ENCODE measurements at regions of chr3 and their contacts with region 1.

Region 1: DNA sequence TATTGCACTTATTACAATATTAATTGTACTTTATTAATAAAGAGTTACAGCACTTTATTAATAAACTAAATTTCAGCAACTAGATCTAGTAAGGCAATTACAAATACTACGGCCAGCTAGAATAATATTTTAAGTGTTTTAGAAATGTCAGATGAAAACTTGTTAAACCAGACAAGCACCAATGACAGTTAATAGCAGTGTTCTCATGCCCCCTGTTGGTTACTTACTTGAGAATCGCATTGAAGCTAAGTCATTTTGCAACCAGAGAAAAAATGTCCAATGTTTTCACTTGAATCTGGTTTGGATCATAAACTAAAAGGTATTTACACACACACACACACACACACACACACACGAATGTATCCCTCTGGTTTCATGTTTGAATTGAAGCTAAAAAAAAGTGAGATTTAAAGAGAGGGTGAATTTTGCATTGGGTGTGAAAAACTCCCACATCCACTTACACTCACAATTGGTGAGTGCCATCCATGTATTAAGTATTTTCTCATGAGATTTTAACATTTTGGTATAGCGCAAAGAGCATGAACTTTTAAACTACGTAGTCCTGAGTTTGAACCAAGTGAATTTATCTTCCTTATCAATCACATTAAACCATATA is 347.7 kb downstream of the ZBBX start:
- DNase-seq: peak; percentile 61
- H3K4me3 ChIP-seq: no peak overlapping the region
- H3K27ac ChIP-seq: no peak overlapping the region
- H3K4me1 ChIP-seq: no peaks in the 10 kb centered on the region
- H3K27me3 ChIP-seq: no peaks in the 10 kb centered on the region
- CTCF ChIP-seq: peak; percentile 64

Region 2: GRCh38 chr3:165854696-165855095 is 1177.7 kb before region 1 on chr3:
- CTCF ChIA-PET with region 1: no interaction called
- POLR2A ChIA-PET with region 1: no interaction called
- intact Hi-C with region 1: loop called (anchors 5 kb)
- DNase-seq: peak; percentile 49
- H3K4me3 ChIP-seq: no peak overlapping the region
- H3K27ac ChIP-seq: no peak overlapping the region
- H3K4me1 ChIP-seq: peaks cover 7% of the 10 kb centered on the region
- H3K27me3 ChIP-seq: no peaks in the 10 kb centered on the region
- CTCF ChIP-seq: peak; percentile 70

Region 3: GRCh38 chr3:165895918-165896317 is 1136.5 kb before region 1 on chr3:
- CTCF ChIA-PET with region 1: no interaction called
- POLR2A ChIA-PET with region 1: no interaction called
- intact Hi-C with region 1: loop called (anchors 2 kb)
- DNase-seq: peak; percentile 49
- H3K4me3 ChIP-seq: no peak overlapping the region
- H3K27ac ChIP-seq: no peak overlapping the region
- H3K4me1 ChIP-seq: no peaks in the 10 kb centered on the region
- H3K27me3 ChIP-seq: no peaks in the 10 kb centered on the region
- CTCF ChIP-seq: peak; percentile 68

Region 4: GRCh38 chr3:166013073-166013679 is 1019.2 kb before region 1 on chr3:
- CTCF ChIA-PET with region 1: no interaction called
- POLR2A ChIA-PET with region 1: no interaction called
- intact Hi-C with region 1: loop called (anchors 2 kb)
- DNase-seq: peak; percentile 56
- H3K4me3 ChIP-seq: no peak overlapping the region
- H3K27ac ChIP-seq: no peak overlapping the region
- H3K4me1 ChIP-seq: no peaks in the 10 kb centered on the region
- H3K27me3 ChIP-seq: no peaks in the 10 kb centered on the region
- CTCF ChIP-seq: peak; percentile 65

Region 5: DNA sequence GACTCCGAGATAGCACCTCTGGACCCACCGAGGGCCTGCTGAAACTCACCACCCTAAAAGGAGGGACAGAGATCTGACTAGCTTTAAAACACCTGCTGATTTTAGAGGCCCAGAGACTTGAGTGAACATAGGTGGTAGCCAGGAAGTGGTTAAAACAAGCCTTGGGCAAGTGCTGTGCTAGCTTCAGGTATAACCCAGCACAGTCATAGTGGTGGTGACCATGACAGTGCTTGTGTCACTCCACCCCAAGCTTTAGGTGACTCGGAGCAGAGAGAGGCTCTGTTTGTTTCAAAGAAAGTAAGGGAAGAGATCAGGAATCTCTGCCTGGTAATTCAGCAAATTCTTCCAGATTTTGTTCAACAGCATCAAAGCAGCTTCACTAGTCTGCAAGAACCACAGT is 554.0 kb before region 1 on chr3:
- CTCF ChIA-PET with region 1: no interaction called
- POLR2A ChIA-PET with region 1: no interaction called
- intact Hi-C with region 1: no loop called
- DNase-seq: no peak
- H3K4me3 ChIP-seq: no peak overlapping the region
- H3K27ac ChIP-seq: no peak overlapping the region
- H3K4me1 ChIP-seq: no peaks in the 10 kb centered on the region
- H3K27me3 ChIP-seq: no peaks in the 10 kb centered on the region
- CTCF ChIP-seq: no peak

Region 6: DNA sequence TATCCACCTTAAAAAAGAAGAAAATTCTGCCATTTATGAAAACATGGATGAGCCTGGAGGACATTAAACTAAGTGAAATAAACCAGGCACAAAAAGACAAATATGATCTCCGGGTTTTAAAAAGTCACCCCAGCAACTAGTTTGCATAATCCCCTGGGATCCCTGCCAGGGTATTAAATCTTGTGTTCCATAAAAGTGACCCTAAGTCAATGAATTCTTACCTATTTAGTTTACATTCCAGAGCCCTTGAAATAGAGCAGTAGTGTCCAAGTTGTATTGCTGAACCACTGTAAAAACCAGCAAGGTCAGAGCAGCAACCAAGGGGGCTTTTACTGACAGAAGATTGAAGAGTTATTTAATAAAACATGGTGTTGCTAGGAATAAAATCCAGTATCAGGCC is 478.3 kb before region 1 on chr3:
- CTCF ChIA-PET with region 1: interaction called, 3 read pairs
- POLR2A ChIA-PET with region 1: no interaction called
- intact Hi-C with region 1: loop called (anchors 5 kb)
- DNase-seq: peak; percentile 47
- H3K4me3 ChIP-seq: no peak overlapping the region
- H3K27ac ChIP-seq: no peak overlapping the region
- H3K4me1 ChIP-seq: peaks cover 12% of the 10 kb centered on the region
- H3K27me3 ChIP-seq: no peaks in the 10 kb centered on the region
- CTCF ChIP-seq: no peak

Region 7: GRCh38 chr3:166837535-166837934 is 194.8 kb before region 1 on chr3:
- CTCF ChIA-PET with region 1: no interaction called
- POLR2A ChIA-PET with region 1: no interaction called
- intact Hi-C with region 1: loop called (anchors 10 kb)
- DNase-seq: peak; percentile 21
- H3K4me3 ChIP-seq: no peak overlapping the region
- H3K27ac ChIP-seq: no peak overlapping the region
- H3K4me1 ChIP-seq: no peaks in the 10 kb centered on the region
- H3K27me3 ChIP-seq: no peaks in the 10 kb centered on the region
- CTCF ChIP-seq: peak; percentile 60

Region 8: GRCh38 chr3:167001374-167001773 is 31.0 kb before region 1 on chr3:
- CTCF ChIA-PET with region 1: no interaction called
- POLR2A ChIA-PET with region 1: no interaction called
- intact Hi-C with region 1: no loop called
- DNase-seq: no peak
- H3K4me3 ChIP-seq: no peak overlapping the region
- H3K27ac ChIP-seq: no peak overlapping the region
- H3K4me1 ChIP-seq: no peaks in the 10 kb centered on the region
- H3K27me3 ChIP-seq: no peaks in the 10 kb centered on the region
- CTCF ChIP-seq: no peak

Region 9: GRCh38 chr3:167350245-167350862 is 318.0 kb after region 1 on chr3:
- CTCF ChIA-PET with region 1: no interaction called
- POLR2A ChIA-PET with region 1: no interaction called
- intact Hi-C with region 1: loop called (anchors 10 kb)
- DNase-seq: peak; percentile 27
- H3K4me3 ChIP-seq: no peak overlapping the region
- H3K27ac ChIP-seq: no peak overlapping the region
- H3K4me1 ChIP-seq: no peaks in the 10 kb centered on the region
- H3K27me3 ChIP-seq: no peaks in the 10 kb centered on the region
- CTCF ChIP-seq: peak; percentile 68

Measured in A673 (cell line).